ENCODE measurements at regions of chr4 and their contacts with region 1.

Region 1: DNA sequence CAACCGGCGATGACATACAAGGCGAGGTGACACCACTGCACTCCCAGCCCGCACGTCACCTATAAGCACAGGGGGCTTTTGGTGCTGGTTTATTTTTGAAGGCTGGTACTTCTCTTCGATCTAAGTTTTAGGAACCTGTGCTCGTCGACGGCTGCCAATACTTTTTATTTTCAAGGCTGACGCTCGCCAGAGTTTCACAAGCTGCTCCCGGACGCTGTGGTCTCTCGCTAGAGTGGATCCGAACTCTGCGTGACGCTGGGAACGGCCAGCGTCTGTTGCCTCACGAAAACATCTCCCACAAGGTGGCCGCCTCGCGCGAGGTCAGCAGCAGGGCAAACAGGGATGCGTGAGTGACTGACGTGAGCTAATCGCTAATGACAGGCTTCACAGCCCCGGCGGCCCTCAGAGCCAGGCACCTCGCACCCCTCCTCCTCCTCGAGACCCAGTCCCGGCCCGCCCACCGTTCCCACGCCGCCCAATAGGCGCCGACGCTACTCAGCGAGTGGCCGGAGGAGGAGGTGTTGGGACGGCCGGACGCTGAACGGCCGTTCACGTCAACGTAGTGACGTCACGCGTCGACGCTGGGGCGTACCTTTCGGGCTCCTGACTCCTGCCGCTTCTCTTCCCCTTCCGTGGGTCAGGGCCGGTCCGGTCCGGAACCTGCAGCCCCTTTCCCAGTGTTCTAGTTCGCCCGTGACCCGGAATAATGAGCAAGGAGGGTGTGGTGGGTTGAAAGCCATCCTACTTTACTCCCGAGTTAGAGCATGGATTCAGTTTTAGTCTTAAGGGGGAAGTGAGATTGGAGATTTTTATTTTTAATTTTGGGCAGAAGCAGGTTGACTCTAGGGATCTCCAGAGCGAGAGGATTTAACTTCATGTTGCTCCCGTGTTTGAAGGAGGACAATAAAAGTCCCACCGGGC is at the start of gene CLCN3:
- DNase-seq: peak; percentile 99
- H3K4me3 ChIP-seq: peak within 1 kb of the TSS; percentile 67
- H3K27ac ChIP-seq: peak within 1 kb of the TSS; percentile 96
- H3K4me1 ChIP-seq: no peaks in the 10 kb centered on the region
- H3K27me3 ChIP-seq: no peaks in the 10 kb centered on the region
- CTCF ChIP-seq: no peak
- total RNA-seq, gene CLCN3: 137 to 148 TPM

Region 2: GRCh38 chr4:169659716-169660670 is 39.8 kb after region 1 on chr4:
- intact Hi-C with region 1: loop called (anchors 5 kb)
- DNase-seq: peak; percentile 84
- H3K4me3 ChIP-seq: peak overlapping the region; percentile 37
- H3K27ac ChIP-seq: peak overlapping the region; percentile 94
- H3K4me1 ChIP-seq: no peaks in the 10 kb centered on the region
- H3K27me3 ChIP-seq: no peaks in the 10 kb centered on the region
- CTCF ChIP-seq: no peak

Region 3: DNA sequence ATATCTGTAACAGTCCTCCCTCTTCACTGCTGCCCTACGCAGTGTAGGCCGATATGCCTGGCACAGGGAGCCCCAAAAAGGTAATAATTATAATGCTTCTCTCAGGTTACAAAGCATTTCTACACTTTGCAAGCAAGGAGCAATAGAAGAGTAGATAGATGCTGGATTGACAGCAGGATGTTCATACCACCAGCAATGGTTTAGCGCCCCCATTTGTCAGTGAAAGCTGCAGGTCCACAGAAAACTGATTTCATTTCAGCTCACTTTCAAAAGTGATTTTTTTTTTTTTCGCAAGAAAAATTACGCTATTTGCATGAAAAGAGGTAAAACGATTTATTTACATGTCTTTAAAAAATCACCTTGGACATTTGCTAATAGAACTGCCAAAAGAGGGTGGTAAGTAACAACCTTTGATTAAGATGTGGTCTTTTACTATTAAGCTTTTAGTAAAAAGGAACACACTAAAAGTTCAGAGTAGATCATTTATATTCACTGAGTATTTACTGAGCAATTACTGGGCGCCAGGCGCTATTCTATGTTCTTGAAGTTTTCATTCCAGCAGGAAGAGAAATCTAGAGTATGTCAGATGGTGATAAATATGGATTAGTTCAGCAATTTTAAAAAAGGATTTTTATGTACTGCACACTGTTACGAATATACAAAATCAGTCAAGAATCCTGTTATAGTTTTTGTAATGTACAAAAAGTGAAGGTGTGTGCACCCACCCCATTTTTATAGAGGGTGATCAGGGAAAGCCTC is 103.2 kb after region 1 on chr4:
- intact Hi-C with region 1: loop called (anchors 10 kb)
- DNase-seq: no peak
- H3K4me3 ChIP-seq: no peak overlapping the region
- H3K27ac ChIP-seq: no peak overlapping the region
- H3K4me1 ChIP-seq: no peaks in the 10 kb centered on the region
- H3K27me3 ChIP-seq: no peaks in the 10 kb centered on the region
- CTCF ChIP-seq: no peak

Region 4: DNA sequence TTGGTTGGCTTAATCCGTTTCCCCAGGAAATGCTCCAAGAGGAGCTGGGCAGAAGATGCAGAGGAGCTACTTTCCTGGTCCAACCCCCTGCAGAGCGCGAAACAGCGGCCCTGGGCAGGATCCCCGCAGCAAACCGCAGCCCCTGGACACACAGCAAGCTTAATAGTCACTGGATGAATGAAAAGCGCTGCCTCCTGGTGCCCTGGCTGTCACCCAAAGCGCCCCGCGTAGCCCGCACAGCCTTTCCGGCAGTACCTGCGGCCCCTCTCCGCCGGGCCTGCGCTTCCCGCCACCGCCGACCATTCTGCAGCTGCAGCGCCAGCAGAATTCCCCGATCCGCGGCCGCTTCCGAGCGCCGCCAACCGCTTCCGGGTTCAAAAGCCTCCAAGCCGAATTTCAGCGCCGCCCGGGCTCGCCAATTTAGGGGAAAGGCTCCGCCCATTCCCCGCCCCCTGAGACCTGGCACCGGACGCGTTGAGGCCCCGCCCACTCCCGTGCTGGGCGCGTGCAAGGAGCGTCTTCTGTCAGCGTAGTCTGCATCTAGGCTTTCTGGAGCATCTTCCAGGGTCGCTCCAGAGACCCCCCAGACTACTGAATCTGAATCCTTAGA is 137.5 kb after region 1 on chr4 and contains the start of gene HPF1:
- intact Hi-C with region 1: loop called (anchors 10 kb)
- DNase-seq: peak; percentile 98
- H3K4me3 ChIP-seq: peak within 1 kb of the TSS; percentile 66
- H3K27ac ChIP-seq: peak within 1 kb of the TSS; percentile 66
- H3K4me1 ChIP-seq: peaks cover 8% of the 10 kb centered on the region
- H3K27me3 ChIP-seq: no peaks in the 10 kb centered on the region
- CTCF ChIP-seq: no peak
- total RNA-seq, gene HPF1: 11.7 to 23.6 TPM

Region 5: DNA sequence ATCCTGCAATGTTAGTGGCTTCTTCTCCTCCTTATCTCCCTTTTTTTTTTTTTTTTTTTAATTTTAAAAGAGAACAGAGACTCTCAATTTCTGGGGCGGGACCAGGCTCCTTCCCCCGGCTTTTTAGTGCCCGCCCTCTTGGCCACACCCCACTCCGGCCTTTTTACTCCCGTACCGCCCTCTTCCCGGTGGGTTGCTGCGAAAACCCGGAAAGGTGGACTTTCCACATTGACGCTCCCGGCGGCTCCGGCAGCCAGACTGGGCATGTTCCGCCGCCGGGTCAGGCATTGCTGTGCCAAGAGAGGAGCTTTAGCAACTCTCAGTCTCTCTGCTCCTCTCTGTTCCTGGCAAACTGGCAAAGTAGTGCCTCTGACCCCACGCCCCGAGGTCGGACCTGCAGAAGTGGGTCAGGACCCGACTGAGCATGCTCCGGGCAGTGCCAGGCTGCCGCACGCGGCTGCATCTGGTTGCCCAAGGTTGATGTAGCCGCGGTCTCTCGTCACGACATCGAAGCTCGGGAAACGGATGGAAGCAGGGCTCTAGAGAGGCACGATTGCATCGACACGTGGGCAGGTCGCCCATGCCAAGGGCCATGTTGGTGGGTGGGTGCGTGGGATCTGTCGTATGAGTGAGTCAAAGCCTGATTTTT is 407.1 kb after region 1 on chr4:
- intact Hi-C with region 1: loop called (anchors 10 kb)
- DNase-seq: peak; percentile 97
- H3K4me3 ChIP-seq: peak overlapping the region; percentile 71
- H3K27ac ChIP-seq: peak overlapping the region; percentile 84
- H3K4me1 ChIP-seq: no peaks in the 10 kb centered on the region
- H3K27me3 ChIP-seq: no peaks in the 10 kb centered on the region
- CTCF ChIP-seq: no peak

Measured in colonic mucosa (tissue), 4 donors.